Breast epithelium (tissue), 4 donors: ENCODE measurements at regions of chr9 and their contacts with region 1.

Region 1: GRCh38 chr9:18976709-18977531 is 56.1 kb downstream of the SAXO1 start:
- DNase-seq: no peak
- H3K4me3 ChIP-seq: peak overlapping the region in 2 of 3 donors; percentile 17 to 39
- H3K27ac ChIP-seq: peak overlapping the region in 1 of 2 donors; percentile 46
- H3K4me1 ChIP-seq: no peaks in the 10 kb centered on the region
- H3K27me3 ChIP-seq: no peaks in the 10 kb centered on the region
- CTCF ChIP-seq: no peak
- POLR2A ChIP-seq: no peak

Region 2: DNA sequence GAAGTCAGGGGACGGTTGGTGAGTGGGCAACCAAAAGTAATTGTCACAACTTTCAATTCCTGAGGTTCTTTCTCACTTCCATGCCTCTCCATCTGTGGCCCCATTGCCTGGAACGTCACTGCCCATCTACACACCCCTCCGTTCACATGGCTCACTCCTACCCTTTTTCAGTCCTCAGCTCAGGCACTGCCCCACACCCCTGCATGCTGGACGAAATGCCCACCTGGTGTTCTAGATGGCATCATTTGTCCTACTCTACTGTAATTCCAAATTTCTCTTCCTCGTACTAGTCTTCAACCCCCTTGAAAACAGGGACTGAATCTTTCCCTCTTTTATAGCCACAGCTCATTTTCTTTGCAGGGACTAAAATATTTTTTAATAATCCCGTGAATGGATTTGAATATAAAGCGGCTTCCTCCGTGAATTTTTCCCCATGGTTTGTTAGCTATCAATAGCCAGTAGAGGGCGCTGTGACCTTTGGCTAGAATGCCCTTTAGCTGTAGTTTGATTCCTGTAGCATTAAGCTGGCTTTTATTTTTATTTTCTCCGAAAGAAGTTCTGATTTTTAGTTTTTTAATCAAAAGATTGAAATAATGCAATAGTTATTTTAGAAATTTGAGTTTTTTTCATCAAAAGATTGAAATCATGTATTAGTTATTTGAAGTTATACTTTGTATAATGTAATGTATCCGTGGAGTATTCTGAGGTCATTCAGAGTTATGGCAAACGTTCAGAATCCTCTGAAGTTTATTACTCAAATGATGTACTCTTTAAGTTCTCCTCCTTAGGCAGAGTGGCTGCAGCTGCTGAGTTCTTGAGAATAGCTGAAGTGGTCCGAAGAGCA is 1166.0 kb before region 1 on chr9:
- intact Hi-C with region 1: no loop called
- DNase-seq: no peak
- H3K4me3 ChIP-seq: no peak overlapping the region
- H3K27ac ChIP-seq: no peak overlapping the region
- H3K4me1 ChIP-seq: no peaks in the 10 kb centered on the region
- H3K27me3 ChIP-seq: no peaks in the 10 kb centered on the region
- CTCF ChIP-seq: peak; percentile 27 to 66 (median 64)
- POLR2A ChIP-seq: no peak

Region 3: DNA sequence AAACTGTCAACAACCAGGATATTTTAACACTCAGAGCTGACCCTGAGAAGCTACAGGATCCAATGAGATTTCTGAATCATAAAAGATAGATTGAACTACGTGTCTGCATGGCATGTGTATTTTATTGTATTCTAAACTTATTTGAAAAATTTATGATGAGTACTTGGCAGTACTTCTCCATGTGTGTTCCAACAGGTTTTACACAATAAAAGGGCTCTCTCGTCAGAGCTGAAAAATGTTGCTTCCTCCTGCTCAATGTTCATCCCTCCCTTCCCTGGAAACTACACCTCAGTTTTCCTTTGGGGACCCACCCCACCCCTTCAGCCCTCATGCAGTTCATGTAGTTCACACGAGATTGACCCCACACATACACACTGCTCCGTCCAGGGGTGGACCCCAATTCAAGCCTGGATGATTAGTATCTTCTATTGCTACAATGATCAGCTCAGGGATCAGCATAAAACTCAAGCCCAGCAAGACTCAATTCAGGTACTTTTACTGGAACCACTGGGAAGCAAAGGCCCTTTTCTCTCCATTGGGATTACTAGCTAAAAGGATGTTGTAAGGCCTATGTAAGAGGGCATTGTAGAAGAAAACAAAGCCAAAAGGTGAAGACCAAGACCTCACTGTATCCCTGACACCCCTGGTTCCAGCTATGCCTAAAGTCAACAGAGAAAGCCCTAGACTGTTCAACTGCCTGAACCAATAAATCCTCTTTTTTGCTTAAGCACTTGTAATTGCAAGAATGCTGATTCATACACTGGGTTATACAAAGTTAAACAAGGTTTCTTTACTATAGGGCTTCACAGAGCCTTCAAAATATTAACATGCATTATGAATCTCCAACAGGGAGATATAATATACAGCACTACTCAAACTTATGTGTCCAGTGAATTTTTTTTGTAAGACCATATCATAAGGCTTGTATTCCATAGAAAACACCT is 56.5 kb before region 1 on chr9:
- intact Hi-C with region 1: loop called (anchors 2 kb)
- DNase-seq: no peak
- H3K4me3 ChIP-seq: no peak overlapping the region
- H3K27ac ChIP-seq: no peak overlapping the region
- H3K4me1 ChIP-seq: no peaks in the 10 kb centered on the region
- H3K27me3 ChIP-seq: no peaks in the 10 kb centered on the region
- CTCF ChIP-seq: no peak
- POLR2A ChIP-seq: no peak

Region 4: GRCh38 chr9:18928711-18929110 is 48.2 kb before region 1 on chr9:
- intact Hi-C with region 1: loop called (anchors 2 kb)
- DNase-seq: no peak
- H3K4me3 ChIP-seq: no peak overlapping the region
- H3K27ac ChIP-seq: no peak overlapping the region
- H3K4me1 ChIP-seq: no peaks in the 10 kb centered on the region
- H3K27me3 ChIP-seq: no peaks in the 10 kb centered on the region
- CTCF ChIP-seq: no peak
- POLR2A ChIP-seq: no peak